Activated naive CD4-positive, alpha-beta T cell treated with anti-CD3 and anti-CD28 coated beads for 36 hours (primary cell): ENCODE measurements at regions of chr15 and their contacts with region 1.

Region 1: GRCh38 chr15:84658080-84658787 is at the start of gene NMB:
- DNase-seq: peak; percentile 83
- H3K4me3 Mint-ChIP-seq: peak within 1 kb of the TSS; percentile 70
- H3K27ac Mint-ChIP-seq: no peak within 1 kb of the TSS
- H3K4me1 Mint-ChIP-seq: peaks cover 28% of the 10 kb centered on the region
- H3K27me3 Mint-ChIP-seq: no peaks in the 10 kb centered on the region
- total RNA-seq, gene NMB: 5.1 to 5.7 TPM

Region 2: GRCh38 chr15:84669726-84670125 is 11.5 kb after region 1 on chr15:
- CTCF ChIA-PET with region 1: interaction called, 4 read pairs
- intact Hi-C with region 1: loop called (anchors 2 kb)
- DNase-seq: peak; percentile 59
- H3K4me3 Mint-ChIP-seq: no peak overlapping the region
- H3K27ac Mint-ChIP-seq: no peak overlapping the region
- H3K4me1 Mint-ChIP-seq: peaks cover 35% of the 10 kb centered on the region
- H3K27me3 Mint-ChIP-seq: no peaks in the 10 kb centered on the region

Region 3: DNA sequence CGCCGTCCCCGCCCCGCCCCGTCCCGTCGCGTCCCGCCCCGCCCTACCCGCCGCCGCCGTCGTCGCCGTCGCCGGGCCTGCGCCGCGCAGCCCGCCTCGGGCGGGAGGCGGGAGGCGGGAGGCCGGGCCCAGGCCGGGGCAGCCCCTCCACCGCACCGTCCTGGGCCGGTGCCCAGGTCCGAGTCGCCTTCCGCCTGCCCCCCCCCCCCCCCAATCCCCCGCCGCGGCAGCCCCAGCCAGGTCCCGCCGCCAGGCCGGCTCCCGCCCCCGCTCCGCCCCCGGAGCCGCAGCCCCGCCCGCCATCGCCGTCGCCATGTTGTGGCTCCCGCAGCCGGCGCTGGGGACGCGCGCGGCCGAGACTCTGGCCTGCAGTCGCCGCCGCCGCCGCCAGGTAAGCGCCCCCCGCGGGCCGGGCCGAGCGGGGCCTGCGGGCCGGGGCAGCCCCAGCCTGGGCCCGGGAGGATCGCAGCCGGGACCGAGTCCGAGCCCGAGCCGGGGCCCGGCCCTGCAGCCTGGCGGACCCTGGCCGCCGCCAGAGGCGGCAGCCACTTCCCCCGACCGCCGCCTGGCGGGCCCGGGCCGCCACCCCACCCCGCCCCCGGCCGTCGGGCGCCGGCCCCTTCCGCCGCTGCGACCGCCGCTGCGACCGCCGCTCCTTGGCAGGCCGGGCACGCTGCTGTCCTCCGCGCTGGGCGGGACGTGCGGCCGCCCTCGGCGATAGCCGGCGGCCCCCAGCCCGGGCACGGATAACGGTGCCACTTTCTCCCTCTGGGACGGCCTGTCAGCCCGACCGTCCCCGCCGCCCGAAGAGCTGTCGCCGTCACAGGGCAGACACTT is 90.3 kb after region 1 on chr15 and contains the start of gene ZNF592:
- CTCF ChIA-PET with region 1: interaction called, 6 read pairs
- intact Hi-C with region 1: loop called (anchors 1 kb)
- DNase-seq: peak; percentile 79
- H3K4me3 Mint-ChIP-seq: peak within 1 kb of the TSS; percentile 97
- H3K27ac Mint-ChIP-seq: peak within 1 kb of the TSS; percentile 98
- H3K4me1 Mint-ChIP-seq: peaks cover 54% of the 10 kb centered on the region
- H3K27me3 Mint-ChIP-seq: no peaks in the 10 kb centered on the region
- total RNA-seq, gene ZNF592: 24.2 to 24.3 TPM

Region 4: GRCh38 chr15:84773716-84774115 is 115.5 kb after region 1 on chr15:
- CTCF ChIA-PET with region 1: no interaction called
- intact Hi-C with region 1: no loop called
- DNase-seq: no peak
- H3K4me3 Mint-ChIP-seq: no peak overlapping the region
- H3K27ac Mint-ChIP-seq: no peak overlapping the region
- H3K4me1 Mint-ChIP-seq: peaks cover 19% of the 10 kb centered on the region
- H3K27me3 Mint-ChIP-seq: no peaks in the 10 kb centered on the region

Region 5: GRCh38 chr15:84871428-84872305 is 213.4 kb after region 1 on chr15:
- CTCF ChIA-PET with region 1: no interaction called
- intact Hi-C with region 1: loop called (anchors 2 kb)
- DNase-seq: peak; percentile 30
- H3K4me3 Mint-ChIP-seq: no peak overlapping the region
- H3K27ac Mint-ChIP-seq: no peak overlapping the region
- H3K4me1 Mint-ChIP-seq: no peaks in the 10 kb centered on the region
- H3K27me3 Mint-ChIP-seq: no peaks in the 10 kb centered on the region

Region 6: GRCh38 chr15:84981054-84981710 is 322.9 kb after region 1 on chr15:
- CTCF ChIA-PET with region 1: no interaction called
- intact Hi-C with region 1: loop called (anchors 1 kb)
- DNase-seq: peak; percentile 95
- H3K4me3 Mint-ChIP-seq: peak overlapping the region; percentile 92
- H3K27ac Mint-ChIP-seq: peak overlapping the region; percentile 93
- H3K4me1 Mint-ChIP-seq: peaks cover 43% of the 10 kb centered on the region
- H3K27me3 Mint-ChIP-seq: no peaks in the 10 kb centered on the region